GM12878 (cell line): ENCODE measurements at regions of chr9 and their contacts with region 1.

Region 1: DNA sequence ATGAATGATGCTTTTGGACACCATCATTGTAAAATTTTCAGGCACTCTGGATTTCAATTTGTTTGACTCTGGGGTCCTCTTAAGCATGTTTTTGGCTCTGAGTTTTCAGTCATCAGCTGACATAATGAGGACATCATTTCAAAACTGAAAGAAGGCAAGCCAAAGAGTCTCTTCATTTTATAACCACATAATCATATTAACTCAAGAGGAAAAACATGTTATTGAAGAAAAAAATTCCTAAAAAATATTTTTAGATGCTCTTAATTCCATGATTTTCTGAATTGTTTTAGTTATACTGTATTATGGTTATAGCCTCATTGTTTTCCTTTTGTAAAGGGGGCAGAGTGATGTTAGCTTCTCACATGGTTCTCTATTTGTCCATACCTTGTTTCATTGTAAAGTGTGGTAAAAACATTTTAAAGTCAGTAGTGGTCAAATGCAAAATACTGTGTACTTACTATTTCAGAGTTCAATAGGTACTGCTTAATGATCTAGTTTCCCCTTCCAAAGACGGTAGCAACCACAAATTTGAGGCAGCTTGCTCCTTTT is 472.1 kb downstream of the DMRT2 start:
- DNase-seq: no peak
- ATAC-seq: peak; percentile 92
- H3K4me3 ChIP-seq: no peak overlapping the region
- H3K27ac ChIP-seq: no peak overlapping the region
- H3K4me1 ChIP-seq: no peaks in the 10 kb centered on the region; the same call in 1 of the 2 replicates
- H3K27me3 ChIP-seq: no peaks in the 10 kb centered on the region
- CTCF ChIP-seq: peak in 1 of 3 experiments; percentile 22; a peak in 1 of 6 replicates
- EP300 ChIP-seq: peak in 1 of 2 experiments; percentile 45; a peak in 1 of 4 replicates
- POLR2A ChIP-seq: no peak
- RAD21 ChIP-seq: 0 out of 2 replicates have a peak, but pooled peaks have one; percentile 14

Region 2: GRCh38 chr9:1580215-1580614 is 57.9 kb after region 1 on chr9:
- CTCF ChIA-PET with region 1: interaction called, 5 read pairs
- POLR2A ChIA-PET with region 1: interaction called, 4 read pairs
- RAD21 ChIA-PET with region 1: interaction called, 12 read pairs
- SMC1A ChIA-PET with region 1: interaction called, 9 read pairs
- in situ Hi-C with region 1: no loop called
- intact Hi-C with region 1: no loop called
- DNase-seq: no peak
- ATAC-seq: peak; percentile 92
- H3K4me3 ChIP-seq: no peak overlapping the region
- H3K27ac ChIP-seq: no peak overlapping the region
- H3K4me1 ChIP-seq: 0 out of 2 replicates have a peak, but pooled peaks cover 2% of the 10 kb centered on the region
- H3K27me3 ChIP-seq: no peaks in the 10 kb centered on the region
- CTCF ChIP-seq: no peak
- EP300 ChIP-seq: no peak
- POLR2A ChIP-seq: no peak
- RAD21 ChIP-seq: no peak

Region 3: GRCh38 chr9:1668441-1668840 is 146.1 kb after region 1 on chr9:
- CTCF ChIA-PET with region 1: no interaction called
- POLR2A ChIA-PET with region 1: no interaction called
- RAD21 ChIA-PET with region 1: no interaction called
- SMC1A ChIA-PET with region 1: no interaction called
- in situ Hi-C with region 1: no loop called
- intact Hi-C with region 1: no loop called
- DNase-seq: no peak
- ATAC-seq: no peak
- H3K4me3 ChIP-seq: no peak overlapping the region
- H3K27ac ChIP-seq: no peak overlapping the region
- H3K4me1 ChIP-seq: no peaks in the 10 kb centered on the region
- H3K27me3 ChIP-seq: no peaks in the 10 kb centered on the region
- CTCF ChIP-seq: no peak
- EP300 ChIP-seq: no peak
- POLR2A ChIP-seq: no peak
- RAD21 ChIP-seq: no peak